ENCODE measurements at regions of chr12 and their contacts with region 1.

Region 1: GRCh38 chr12:124369055-124369900 is 74.4 kb downstream of the RFLNA start:
- DNase-seq: peak; percentile 93 to 99
- ATAC-seq: peak; percentile 70 to 75
- H3K4me3 ChIP-seq: peak overlapping the region in 3 of 4 donors; percentile 30 to 41 (median 35)
- H3K27ac ChIP-seq: peak overlapping the region; percentile 93 to 98 (median 97)
- H3K4me1 ChIP-seq: peaks cover 75 to 83% of the 10 kb centered on the region in 2 donors
- H3K27me3 ChIP-seq: no peaks in the 10 kb centered on the region
- CTCF ChIP-seq: peak; percentile 58 to 82 (median 74)
- POLR2A ChIP-seq: peak; percentile 49 to 60

Region 2: DNA sequence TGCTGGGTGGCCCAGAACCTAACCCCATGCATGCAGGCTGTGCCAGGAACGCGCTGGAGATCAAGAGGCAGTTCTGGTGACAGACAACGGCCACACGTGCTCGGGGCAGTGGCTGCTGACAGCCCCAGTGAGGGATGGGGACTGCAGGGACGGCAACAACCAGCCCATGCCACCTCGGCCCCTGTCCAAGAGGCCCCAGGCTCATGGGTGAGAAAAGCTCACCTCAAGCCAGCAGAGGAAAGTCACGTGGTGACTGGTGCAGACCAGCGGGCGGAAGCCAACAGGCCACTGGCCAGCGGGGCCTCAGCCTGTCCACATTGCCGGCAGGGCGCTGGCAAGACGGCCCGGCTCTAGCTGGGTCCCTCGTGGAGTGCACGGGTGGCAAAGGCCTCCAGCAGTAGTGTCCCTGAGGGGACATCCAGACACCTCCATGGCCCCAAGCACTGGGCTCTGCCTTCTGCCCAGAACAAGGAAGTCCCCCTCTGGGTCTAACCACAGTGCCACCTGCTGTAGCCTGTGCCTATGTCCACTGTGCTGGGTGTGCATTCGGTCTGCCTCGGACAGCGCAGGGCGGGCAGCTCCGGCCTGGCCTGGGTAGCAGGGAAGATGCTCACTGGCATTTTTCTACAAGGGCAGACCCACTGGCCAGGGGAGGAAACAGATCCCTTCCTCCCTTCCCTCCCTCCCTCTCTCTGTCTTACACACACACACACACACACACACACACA is 64.0 kb after region 1 on chr12:
- in situ Hi-C with region 1: no loop called
- intact Hi-C with region 1: loop called (anchors 1 kb)
- DNase-seq: peak; percentile 95 to 97
- ATAC-seq: peak; percentile 80 to 82
- H3K4me3 ChIP-seq: no peak overlapping the region
- H3K27ac ChIP-seq: peak overlapping the region; percentile 81 to 87 (median 85)
- H3K4me1 ChIP-seq: peaks cover 24 to 25% of the 10 kb centered on the region in 2 donors
- H3K27me3 ChIP-seq: no peaks in the 10 kb centered on the region
- CTCF ChIP-seq: peak in 4 of 5 experiments; percentile 15 to 41 (median 39)
- POLR2A ChIP-seq: peak; percentile 25 to 39

Region 3: GRCh38 chr12:124518051-124518932 is 149.0 kb after region 1 on chr12:
- in situ Hi-C with region 1: no loop called
- intact Hi-C with region 1: loop called (anchors 5 kb)
- DNase-seq: peak; percentile 95 to 99
- ATAC-seq: peak; percentile 75 to 84
- H3K4me3 ChIP-seq: peak overlapping the region; percentile 53 to 59 (median 54)
- H3K27ac ChIP-seq: peak overlapping the region; percentile 90 to 99 (median 96)
- H3K4me1 ChIP-seq: peaks cover 83 to 94% of the 10 kb centered on the region in 2 donors
- H3K27me3 ChIP-seq: no peaks in the 10 kb centered on the region
- CTCF ChIP-seq: no peak
- POLR2A ChIP-seq: peak; percentile 45 to 65

Region 4: DNA sequence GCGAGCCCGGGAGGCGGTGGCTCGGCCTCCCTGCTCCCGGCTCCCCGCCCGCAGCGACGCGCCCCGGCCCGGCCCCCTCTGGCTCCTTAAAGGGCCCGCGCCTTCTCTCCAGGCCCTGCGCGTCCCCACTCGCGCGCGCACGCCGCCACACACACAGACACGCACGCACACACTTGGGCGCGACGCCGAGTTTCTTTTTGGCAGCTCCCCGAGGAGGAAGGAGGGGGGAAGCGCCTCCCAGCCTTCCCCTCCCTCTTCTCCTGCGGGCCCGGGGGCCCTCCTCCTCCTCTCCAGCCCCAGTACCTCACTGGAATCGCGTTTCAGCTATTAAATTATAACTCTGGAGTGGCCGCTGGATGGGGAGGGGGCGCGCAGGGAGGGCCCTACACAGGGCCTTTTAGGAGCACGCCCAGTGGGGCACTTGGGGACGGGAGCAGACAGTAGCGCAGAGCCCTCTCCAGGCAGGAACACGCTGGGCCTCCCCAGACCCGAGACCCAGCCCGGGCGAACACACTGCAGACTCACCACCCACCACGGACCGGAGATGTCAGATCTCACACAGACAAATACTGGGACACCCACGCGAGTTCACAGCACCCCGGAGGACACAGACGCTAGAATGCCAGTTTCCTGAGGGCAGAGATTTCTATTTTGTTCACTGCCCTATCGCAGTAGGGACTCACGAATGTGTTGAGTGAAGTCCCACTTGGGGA is 198.5 kb after region 1 on chr12:
- in situ Hi-C with region 1: no loop called
- intact Hi-C with region 1: loop called (anchors 2 kb)
- DNase-seq: peak; percentile 81 to 86
- ATAC-seq: peak; percentile 76 to 79
- H3K4me3 ChIP-seq: peak overlapping the region; percentile 58 to 93 (median 68)
- H3K27ac ChIP-seq: peak overlapping the region; percentile 91 to 98 (median 93)
- H3K4me1 ChIP-seq: peaks cover 27 to 38% of the 10 kb centered on the region in 2 donors
- H3K27me3 ChIP-seq: no peaks in the 10 kb centered on the region
- CTCF ChIP-seq: peak in 2 of 5 experiments; percentile 11 to 30
- POLR2A ChIP-seq: no peak